Activated CD4-positive, alpha-beta T cell treated with anti-CD3 and anti-CD28 coated beads, Interleukin-2, amount 10 ng/mL, durations not matched to agents 24 days and 14 days (primary cell): ENCODE measurements at regions of chr13 and their contacts with region 1.

Region 1: DNA sequence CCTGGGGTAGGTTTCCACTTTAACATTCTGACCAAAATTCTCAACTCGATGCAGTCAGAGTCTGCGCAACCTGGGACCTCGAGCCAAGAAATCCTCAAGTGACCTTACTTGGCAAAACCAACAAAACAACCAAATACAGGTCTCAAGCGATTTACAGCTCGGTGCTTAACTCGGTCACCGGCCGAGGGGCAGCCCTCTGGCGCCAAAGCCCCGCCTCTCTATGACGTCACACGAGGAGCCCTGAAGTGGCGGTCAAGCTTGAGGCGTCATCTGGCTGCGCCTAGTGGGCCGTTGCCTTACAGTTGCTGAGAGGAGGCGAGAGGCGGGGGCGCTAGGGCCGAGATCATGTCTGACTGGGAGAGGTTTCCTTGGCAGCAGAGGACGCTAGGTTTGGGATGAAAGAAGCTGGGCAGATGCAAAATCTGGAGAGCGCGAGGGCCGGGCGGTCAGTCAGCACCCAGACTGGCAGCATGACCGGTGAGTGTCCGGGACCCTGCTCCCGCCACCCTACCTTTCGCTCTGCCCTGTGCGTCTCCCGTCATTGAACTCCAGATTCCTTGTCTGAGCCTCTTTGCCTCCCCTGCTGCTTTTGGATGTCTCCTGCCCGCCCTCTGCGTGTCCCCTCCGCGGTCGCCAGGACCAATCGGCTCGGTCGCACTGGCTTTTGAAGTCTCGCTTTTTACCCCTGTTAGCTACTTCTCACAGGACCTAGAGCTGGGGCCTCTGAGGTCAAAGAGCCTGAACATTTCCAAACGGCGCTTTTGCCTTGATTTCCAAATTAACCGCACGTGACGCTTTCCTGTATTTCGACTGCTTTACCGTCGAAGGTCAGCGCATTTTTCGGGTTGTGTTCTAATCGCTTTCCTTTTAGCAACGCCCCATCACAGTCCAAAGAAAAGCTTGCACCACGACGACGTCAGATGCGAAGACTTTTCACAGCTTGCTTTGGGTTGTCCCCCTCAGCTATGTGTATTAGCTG is at the start of gene CDADC1:
- DNase-seq: peak; percentile 98
- H3K4me3 Mint-ChIP-seq: peak within 1 kb of the TSS; percentile 91
- H3K27ac Mint-ChIP-seq: peak within 1 kb of the TSS; percentile 96
- H3K4me1 Mint-ChIP-seq: peaks cover 23% of the 10 kb centered on the region
- H3K27me3 Mint-ChIP-seq: peaks cover 18% of the 10 kb centered on the region
- total RNA-seq, gene CDADC1: 8.0 and 9.5 TPM in 2 replicates

Region 2: GRCh38 chr13:49082653-49083536 is 165.0 kb before region 1 on chr13:
- intact Hi-C with region 1: no loop called
- DNase-seq: no peak
- H3K4me3 Mint-ChIP-seq: no peak overlapping the region
- H3K27ac Mint-ChIP-seq: no peak overlapping the region
- H3K4me1 Mint-ChIP-seq: peaks cover 7% of the 10 kb centered on the region
- H3K27me3 Mint-ChIP-seq: no peaks in the 10 kb centered on the region

Region 3: DNA sequence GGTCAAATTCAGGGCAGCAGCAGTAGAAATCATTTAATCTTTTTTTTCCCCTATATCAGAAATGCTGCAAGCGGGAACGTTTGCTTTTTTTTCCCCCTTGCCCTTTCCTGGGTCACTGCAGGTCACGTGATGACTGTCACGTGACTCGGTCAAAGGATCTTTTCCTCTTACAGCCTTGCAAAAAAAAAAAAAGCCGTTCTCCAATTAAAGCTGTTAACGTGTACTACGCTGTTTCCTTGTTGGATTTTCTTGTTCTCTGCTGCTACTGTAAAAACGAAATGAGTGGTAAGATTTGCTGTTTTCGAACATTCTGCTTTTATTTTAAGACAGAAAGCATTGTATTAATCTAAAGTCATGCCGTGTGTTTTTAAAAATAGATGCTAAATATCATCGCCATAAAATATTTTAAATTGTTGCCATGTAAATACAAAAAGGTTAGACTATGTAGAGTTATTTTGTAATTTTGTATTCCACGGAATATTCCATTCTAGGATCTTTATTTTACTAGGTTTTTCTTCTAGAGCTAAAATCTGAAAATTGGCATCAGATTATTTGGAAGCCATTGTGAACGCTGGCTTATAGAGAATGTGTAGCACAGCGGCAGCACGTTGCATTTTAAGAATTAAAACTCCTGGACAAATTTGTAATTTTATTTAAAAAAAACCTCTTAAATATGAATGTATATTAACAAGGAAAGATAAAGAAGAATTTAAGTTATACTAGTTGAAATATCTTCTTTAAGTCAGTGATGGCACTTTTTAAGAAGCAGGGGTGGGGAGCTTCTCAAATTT is 137.6 kb before region 1 on chr13:
- intact Hi-C with region 1: loop called (anchors 2 kb)
- DNase-seq: peak; percentile 93
- H3K4me3 Mint-ChIP-seq: peak overlapping the region; percentile 81
- H3K27ac Mint-ChIP-seq: peak overlapping the region; percentile 68
- H3K4me1 Mint-ChIP-seq: peaks cover 19% of the 10 kb centered on the region
- H3K27me3 Mint-ChIP-seq: no peaks in the 10 kb centered on the region

Region 4: DNA sequence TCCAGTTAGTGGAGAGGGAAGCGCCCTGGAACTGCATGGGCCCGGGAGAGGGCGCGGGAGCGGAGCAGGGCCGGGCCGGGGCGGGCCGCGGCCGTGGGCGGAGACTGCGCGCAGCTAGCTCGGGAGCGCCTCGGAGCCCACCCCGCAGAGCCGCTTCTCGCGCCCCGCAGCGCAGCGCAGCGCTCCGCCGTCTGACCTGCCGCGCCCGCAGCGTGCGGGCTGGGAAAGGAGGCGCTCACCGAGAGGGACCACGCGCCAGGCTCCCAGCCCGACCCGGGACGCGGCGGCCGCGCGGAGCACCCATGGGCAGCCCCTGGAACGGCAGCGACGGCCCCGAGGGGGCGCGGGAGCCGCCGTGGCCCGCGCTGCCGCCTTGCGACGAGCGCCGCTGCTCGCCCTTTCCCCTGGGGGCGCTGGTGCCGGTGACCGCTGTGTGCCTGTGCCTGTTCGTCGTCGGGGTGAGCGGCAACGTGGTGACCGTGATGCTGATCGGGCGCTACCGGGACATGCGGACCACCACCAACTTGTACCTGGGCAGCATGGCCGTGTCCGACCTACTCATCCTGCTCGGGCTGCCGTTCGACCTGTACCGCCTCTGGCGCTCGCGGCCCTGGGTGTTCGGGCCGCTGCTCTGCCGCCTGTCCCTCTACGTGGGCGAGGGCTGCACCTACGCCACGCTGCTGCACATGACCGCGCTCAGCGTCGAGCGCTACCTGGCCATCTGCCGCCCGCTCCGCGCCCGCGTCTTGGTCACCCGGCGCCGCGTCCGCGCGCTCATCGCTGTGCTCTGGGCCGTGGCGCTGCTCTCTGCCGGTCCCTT is 27.7 kb before region 1 on chr13 and contains the start of gene MLNR:
- intact Hi-C with region 1: loop called (anchors 2 kb)
- DNase-seq: peak; percentile 79
- H3K4me3 Mint-ChIP-seq: peak within 1 kb of the TSS; percentile 73
- H3K27ac Mint-ChIP-seq: no peak within 1 kb of the TSS
- H3K4me1 Mint-ChIP-seq: peaks cover 3% of the 10 kb centered on the region
- H3K27me3 Mint-ChIP-seq: peaks cover 70% of the 10 kb centered on the region
- total RNA-seq, gene MLNR: not detected in 2 replicates

Region 5: DNA sequence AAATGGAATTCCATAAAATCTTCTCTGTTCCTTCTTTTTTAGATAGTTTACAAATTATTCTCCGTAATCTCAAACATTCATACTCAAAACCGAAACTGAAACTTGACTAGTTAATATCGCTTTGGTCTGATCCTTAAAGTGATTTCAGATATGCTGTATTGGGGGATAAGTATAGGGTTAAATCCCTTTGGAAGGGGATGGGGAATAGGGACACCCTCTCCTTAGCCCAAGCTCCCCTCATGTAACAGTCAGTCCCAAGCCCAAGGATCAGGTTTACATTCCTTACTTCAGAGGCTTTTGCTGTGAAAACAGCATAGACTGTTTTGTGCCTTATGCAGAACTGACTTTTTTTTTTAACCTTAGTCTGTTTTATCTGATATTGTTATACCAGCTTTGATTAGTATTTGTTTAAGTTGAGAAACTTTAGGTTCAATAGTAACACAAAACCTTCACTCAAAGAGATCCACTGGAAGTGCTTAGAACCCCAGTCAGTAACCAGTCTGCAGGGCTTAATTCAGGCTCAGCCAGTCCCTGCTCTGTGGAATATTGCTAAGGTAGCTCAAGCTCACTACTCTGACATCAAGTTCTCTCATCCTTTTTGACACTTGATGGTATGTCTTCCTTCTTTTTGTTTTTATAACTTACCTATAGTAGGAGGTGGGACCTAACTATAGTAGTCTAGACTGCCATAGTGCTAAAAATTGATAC is 10.3 kb after region 1 on chr13:
- intact Hi-C with region 1: loop called (anchors 1 kb)
- DNase-seq: peak; percentile 68
- H3K4me3 Mint-ChIP-seq: peak overlapping the region; percentile 84
- H3K27ac Mint-ChIP-seq: peak overlapping the region; percentile 74
- H3K4me1 Mint-ChIP-seq: peaks cover 33% of the 10 kb centered on the region
- H3K27me3 Mint-ChIP-seq: no peaks in the 10 kb centered on the region

Region 6: DNA sequence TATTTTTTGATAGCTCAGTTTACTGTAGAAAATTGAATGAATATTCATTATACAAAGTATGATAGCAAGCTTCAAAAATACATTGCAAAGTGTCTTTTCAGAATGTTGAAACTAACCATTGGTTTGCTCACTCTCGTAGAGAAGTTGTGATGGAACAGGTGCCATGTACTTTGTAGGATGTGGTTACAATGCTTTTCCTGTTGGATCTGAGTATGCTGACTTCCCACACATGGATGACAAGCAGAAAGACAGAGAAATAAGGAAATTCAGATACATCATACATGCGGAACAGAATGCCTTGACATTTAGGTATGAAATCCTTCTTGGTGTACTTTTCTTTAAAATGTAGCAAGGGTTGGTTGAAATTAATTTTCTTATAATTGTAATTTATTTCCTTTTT is 30.3 kb after region 1 on chr13:
- intact Hi-C with region 1: loop called (anchors 1 kb)
- DNase-seq: no peak
- H3K4me3 Mint-ChIP-seq: no peak overlapping the region
- H3K27ac Mint-ChIP-seq: no peak overlapping the region
- H3K4me1 Mint-ChIP-seq: no peaks in the 10 kb centered on the region
- H3K27me3 Mint-ChIP-seq: no peaks in the 10 kb centered on the region

Region 7: DNA sequence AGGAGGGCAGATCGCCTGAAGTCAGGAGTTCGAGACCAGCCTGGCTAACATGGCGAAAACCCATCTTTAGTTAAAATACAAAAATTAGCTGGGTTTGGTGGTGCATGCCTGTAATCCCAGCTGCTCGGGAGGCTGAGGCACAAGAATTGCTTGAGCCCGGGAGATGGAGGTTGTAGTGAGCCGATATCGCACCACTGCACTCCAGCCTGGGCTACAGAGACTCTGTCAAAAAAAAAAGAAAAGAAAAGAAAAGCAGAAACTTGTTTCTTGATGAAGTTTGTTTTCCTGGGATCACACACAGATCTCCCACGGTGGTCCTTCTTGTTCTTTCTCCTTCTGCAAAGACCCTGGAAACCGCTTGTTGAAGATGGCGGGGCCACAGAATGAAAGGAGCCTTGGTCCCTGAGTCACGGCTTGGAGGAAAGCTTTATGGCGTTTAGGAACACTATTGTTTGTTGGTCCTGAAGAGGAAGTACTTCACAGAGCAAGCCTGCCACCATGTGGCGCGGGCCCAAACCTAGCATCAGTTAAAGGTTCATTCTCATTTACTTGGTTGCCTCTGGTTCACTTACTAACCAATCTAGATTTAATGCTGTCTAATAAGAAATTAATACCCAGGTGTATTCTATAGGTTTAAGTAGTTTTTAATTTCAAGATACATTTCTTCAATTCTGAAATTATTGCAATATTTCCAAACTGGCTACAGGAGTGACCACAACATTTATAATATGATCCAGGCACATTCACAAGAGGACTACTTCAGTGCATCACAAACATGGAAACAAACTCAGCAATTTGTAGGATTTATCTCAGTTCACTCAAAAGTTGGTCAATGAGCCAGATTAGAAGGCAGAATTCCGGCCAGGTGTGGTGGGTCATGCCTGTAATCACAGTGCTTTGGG is 359.1 kb after region 1 on chr13:
- intact Hi-C with region 1: loop called (anchors 5 kb)
- DNase-seq: peak; percentile 93
- H3K4me3 Mint-ChIP-seq: peak overlapping the region; percentile 77
- H3K27ac Mint-ChIP-seq: peak overlapping the region; percentile 64
- H3K4me1 Mint-ChIP-seq: peaks cover 2% of the 10 kb centered on the region
- H3K27me3 Mint-ChIP-seq: peaks cover 3% of the 10 kb centered on the region